ENCODE measurements at regions of chr1 and their contacts with region 1.

Region 1: DNA sequence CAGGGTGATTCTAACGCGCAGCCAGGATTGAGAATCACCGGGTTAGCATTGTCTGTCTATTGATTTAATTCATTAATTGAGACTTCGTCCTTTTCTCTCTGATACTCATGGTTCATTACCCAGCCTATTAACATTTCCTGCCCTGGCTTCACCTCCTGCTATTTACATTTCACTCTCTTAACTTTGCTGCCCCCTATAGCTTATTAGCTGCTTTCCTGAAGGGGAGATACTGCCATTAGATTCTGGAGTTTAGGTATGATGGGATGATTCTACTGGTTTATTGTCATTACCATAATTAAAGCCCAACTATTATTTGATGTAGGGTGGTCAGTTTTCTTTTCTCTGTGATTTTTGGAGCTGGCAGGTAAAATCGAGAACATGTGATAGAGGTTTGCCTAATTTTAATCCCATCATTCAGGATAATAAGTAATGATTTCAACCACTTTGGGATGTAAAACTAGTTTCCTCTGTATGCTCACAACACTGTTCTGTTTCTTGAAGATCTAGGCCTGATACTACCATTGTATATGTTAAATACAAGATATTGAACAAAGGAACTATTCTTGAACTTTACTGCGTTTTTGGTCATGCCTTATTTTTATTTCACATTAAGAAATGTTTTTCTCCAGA is 6.4 kb downstream of the PPP2R5A start:
- DNase-seq: peak; percentile 66
- H3K4me3 Mint-ChIP-seq: peak overlapping the region; percentile 39
- H3K27ac Mint-ChIP-seq: peak overlapping the region; percentile 76
- H3K4me1 Mint-ChIP-seq: peaks cover 69% of the 10 kb centered on the region
- H3K27me3 Mint-ChIP-seq: no peaks in the 10 kb centered on the region

Region 2: GRCh38 chr1:212002536-212002935 is 289.1 kb before region 1 on chr1:
- intact Hi-C with region 1: no loop called
- DNase-seq: no peak
- H3K4me3 Mint-ChIP-seq: no peak overlapping the region
- H3K27ac Mint-ChIP-seq: no peak overlapping the region
- H3K4me1 Mint-ChIP-seq: no peaks in the 10 kb centered on the region
- H3K27me3 Mint-ChIP-seq: no peaks in the 10 kb centered on the region

Region 3: DNA sequence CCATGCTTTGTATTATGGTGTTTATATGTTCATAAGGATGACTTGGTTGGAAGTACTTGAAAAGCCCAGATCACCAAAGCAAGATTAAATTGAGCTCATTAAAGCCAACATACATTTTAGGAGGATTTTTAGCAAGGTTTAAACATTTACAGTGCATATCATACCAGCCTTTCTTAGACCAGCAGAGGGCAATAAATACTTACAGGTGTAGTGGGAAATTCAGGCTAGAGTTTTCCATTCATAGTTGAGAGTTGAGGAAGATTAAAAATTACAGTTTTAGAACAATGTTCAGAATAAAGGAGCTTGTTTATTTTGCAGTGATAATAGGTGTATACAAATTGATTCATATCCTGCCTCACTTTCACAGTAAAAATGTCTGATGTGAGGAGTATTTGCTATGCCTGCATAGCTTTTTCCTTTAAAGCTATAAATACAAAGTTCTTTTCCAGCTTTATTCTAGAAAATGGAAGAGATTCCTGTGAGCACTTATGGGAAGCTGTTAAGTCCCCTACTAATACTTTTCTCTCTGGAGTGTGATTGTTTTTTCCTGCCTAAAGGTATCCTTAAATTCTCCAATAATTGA is 220.8 kb before region 1 on chr1:
- intact Hi-C with region 1: loop called (anchors 1 kb)
- DNase-seq: no peak
- H3K4me3 Mint-ChIP-seq: no peak overlapping the region
- H3K27ac Mint-ChIP-seq: no peak overlapping the region
- H3K4me1 Mint-ChIP-seq: peaks cover 4% of the 10 kb centered on the region
- H3K27me3 Mint-ChIP-seq: no peaks in the 10 kb centered on the region

Region 4: GRCh38 chr1:212162635-212163034 is 129.0 kb before region 1 on chr1:
- intact Hi-C with region 1: loop called (anchors 2 kb)
- DNase-seq: peak; percentile 79
- H3K4me3 Mint-ChIP-seq: peak overlapping the region; percentile 47
- H3K27ac Mint-ChIP-seq: peak overlapping the region; percentile 72
- H3K4me1 Mint-ChIP-seq: peaks cover 37% of the 10 kb centered on the region
- H3K27me3 Mint-ChIP-seq: no peaks in the 10 kb centered on the region

Region 5: GRCh38 chr1:212218911-212219310 is 72.7 kb before region 1 on chr1:
- intact Hi-C with region 1: loop called (anchors 2 kb)
- DNase-seq: peak; percentile 70
- H3K4me3 Mint-ChIP-seq: peak overlapping the region; percentile 34
- H3K27ac Mint-ChIP-seq: peak overlapping the region; percentile 81
- H3K4me1 Mint-ChIP-seq: peaks cover 27% of the 10 kb centered on the region
- H3K27me3 Mint-ChIP-seq: no peaks in the 10 kb centered on the region

Region 6: DNA sequence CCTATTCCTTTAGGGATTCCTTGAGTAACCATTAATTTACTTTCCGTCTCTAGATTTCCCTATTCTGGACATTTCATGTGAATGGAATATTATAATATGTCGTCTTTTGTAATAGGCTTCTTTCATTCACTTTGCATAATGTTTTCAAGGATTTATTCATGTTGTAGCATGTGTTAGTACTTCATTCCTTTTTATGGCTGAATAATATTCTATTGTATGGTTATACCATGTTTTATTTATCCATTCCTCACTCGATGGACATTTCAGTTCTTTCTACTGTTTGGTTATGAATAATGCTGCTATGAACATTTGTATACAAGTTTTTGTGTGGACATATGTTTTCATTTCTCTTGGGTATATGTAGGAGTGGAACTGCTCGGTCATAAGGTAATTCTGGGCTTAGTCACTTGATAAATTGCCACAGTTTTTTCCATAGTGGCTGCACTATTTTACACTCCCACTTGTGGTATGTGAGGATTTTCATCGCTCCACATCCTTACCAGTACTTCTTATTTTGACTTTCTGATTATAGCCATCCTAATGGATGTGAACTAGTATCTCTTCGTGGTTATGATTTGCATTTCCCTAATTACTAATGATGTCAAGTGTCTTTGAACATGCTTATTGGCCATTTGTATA is 11.2 kb after region 1 on chr1:
- intact Hi-C with region 1: loop called (anchors 1 kb)
- DNase-seq: no peak
- H3K4me3 Mint-ChIP-seq: no peak overlapping the region
- H3K27ac Mint-ChIP-seq: peak overlapping the region; percentile 32
- H3K4me1 Mint-ChIP-seq: peaks cover 33% of the 10 kb centered on the region
- H3K27me3 Mint-ChIP-seq: no peaks in the 10 kb centered on the region

Region 7: DNA sequence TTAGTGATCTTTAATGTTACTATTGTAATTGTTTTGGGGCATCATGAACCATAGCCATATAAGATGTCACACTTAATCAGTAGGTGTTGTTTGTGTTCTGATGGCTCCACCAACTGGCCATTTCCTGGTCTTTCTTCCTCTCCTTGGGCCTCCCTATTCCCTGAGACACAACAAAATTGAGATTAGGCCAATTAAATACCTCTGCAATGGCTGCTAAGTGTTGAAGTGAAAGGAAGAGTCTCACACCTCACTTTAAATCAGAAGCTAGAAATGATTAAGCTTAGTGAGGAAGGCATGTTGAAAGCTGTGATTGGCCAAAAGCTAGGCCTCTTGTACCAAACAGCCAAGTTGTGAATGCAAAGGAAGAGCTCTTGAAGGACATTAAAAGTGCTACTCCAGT is 24.3 kb after region 1 on chr1:
- intact Hi-C with region 1: loop called (anchors 2 kb)
- DNase-seq: peak; percentile 62
- H3K4me3 Mint-ChIP-seq: no peak overlapping the region
- H3K27ac Mint-ChIP-seq: peak overlapping the region; percentile 76
- H3K4me1 Mint-ChIP-seq: peaks cover 20% of the 10 kb centered on the region
- H3K27me3 Mint-ChIP-seq: no peaks in the 10 kb centered on the region